HCT116 (cell line): ENCODE measurements at regions of chr1 and their contacts with region 1.

Region 1: GRCh38 chr1:101653482-101653946 is 343.2 kb downstream of the OLFM3 start:
- DNase-seq: peak; percentile 18
- ATAC-seq: peak; percentile 64
- H3K4me3 ChIP-seq: no peak overlapping the region
- H3K27ac ChIP-seq: no peak overlapping the region
- H3K4me1 ChIP-seq: no peaks in the 10 kb centered on the region
- H3K27me3 ChIP-seq: no peaks in the 10 kb centered on the region
- CTCF ChIP-seq: peak; percentile 18 to 51 (median 40); a peak in 4 of 6 replicates
- POLR2A ChIP-seq: no peak
- RAD21 ChIP-seq: peak; percentile 63

Region 2: GRCh38 chr1:100883963-100884362 is 769.6 kb before region 1 on chr1:
- CTCF ChIA-PET with region 1: no interaction called
- POLR2A ChIA-PET with region 1: no interaction called
- RAD21 ChIA-PET with region 1: no interaction called
- intact Hi-C with region 1: no loop called
- DNase-seq: no peak
- ATAC-seq: peak; percentile 44; the same call in 1 of the 2 replicates
- H3K4me3 ChIP-seq: no peak overlapping the region
- H3K27ac ChIP-seq: no peak overlapping the region
- H3K4me1 ChIP-seq: peaks cover 0 to 6% of the 10 kb centered on the region in 2 experiments; a peak in 2 of 4 replicates
- H3K27me3 ChIP-seq: no peaks in the 10 kb centered on the region
- CTCF ChIP-seq: peak in 1 of 3 experiments; percentile 6; a peak in 1 of 6 replicates
- POLR2A ChIP-seq: no peak
- RAD21 ChIP-seq: peak; percentile 15; the same call in 1 of the 2 replicates

Region 3: DNA sequence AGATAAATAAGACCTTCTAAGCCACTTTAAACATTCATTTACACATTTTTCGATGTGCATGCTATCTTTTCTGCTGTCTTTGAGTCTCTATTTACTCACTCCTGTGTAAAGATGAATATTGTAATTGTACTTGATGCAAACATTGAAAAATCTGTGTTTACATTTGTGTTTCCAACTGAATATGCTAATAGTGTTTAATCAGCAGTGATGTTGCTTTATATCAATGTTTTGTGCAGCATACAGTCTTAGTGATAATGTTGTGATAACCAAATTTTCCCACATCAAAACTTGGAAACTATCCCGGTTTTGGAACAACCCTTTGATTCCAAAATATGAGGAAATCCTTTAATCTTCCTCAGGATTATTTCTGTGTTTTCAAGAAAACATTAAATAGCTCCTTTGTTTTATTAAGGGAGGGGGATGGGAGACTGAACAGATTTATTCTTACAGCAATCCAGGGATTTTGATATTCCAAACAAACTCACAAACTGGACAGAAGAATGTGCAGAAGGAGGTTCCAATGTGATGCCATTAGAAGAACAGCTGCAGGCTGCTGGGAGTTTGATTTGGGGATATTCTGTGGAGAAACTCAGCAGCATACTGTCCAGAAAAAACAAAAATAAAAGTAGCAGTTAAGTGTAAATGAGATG is 168.7 kb before region 1 on chr1:
- CTCF ChIA-PET with region 1: no interaction called
- POLR2A ChIA-PET with region 1: no interaction called
- RAD21 ChIA-PET with region 1: no interaction called
- intact Hi-C with region 1: no loop called
- DNase-seq: no peak
- ATAC-seq: no peak
- H3K4me3 ChIP-seq: no peak overlapping the region
- H3K27ac ChIP-seq: no peak overlapping the region
- H3K4me1 ChIP-seq: no peaks in the 10 kb centered on the region
- H3K27me3 ChIP-seq: no peaks in the 10 kb centered on the region
- CTCF ChIP-seq: no peak
- POLR2A ChIP-seq: no peak
- RAD21 ChIP-seq: no peak

Region 4: GRCh38 chr1:103514920-103515503 is 1861.5 kb after region 1 on chr1:
- CTCF ChIA-PET with region 1: no interaction called
- POLR2A ChIA-PET with region 1: no interaction called
- RAD21 ChIA-PET with region 1: no interaction called
- intact Hi-C with region 1: loop called (anchors 5 kb)
- DNase-seq: peak; percentile 35
- ATAC-seq: no peak
- H3K4me3 ChIP-seq: no peak overlapping the region
- H3K27ac ChIP-seq: no peak overlapping the region
- H3K4me1 ChIP-seq: no peaks in the 10 kb centered on the region
- H3K27me3 ChIP-seq: no peaks in the 10 kb centered on the region
- CTCF ChIP-seq: peak; percentile 38 to 68 (median 53); a peak in 5 of 6 replicates
- POLR2A ChIP-seq: no peak
- RAD21 ChIP-seq: peak; percentile 68